H1 (cell line): ENCODE measurements at regions of chr7 and their contacts with region 1.

Region 1: DNA sequence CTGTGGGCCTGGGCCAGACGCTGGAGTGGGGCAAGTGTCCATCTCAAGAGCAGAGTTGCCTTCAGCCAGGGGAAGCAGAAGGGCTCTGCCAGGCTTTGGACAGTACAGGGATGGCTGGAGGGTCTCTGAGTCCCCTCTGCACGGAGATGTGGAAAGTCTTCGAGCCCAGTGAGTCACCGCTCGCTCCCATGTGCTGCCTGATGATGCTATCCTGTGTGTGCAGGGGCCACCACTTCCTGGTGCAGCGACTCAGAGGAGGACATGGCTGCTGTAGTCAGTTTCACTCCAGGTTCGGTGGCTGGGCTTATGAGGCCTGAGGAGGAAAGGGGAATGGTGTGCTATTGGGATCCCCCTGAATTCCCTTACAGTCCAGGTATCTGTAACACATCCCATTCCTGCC is 6.0 kb downstream of the ADCYAP1R1 start:
- DNase-seq: no peak
- H3K4me3 ChIP-seq: no peak overlapping the region
- H3K27ac ChIP-seq: no peak overlapping the region
- H3K4me1 ChIP-seq: peaks cover 0 to 12% (median 8%) of the 10 kb centered on the region in 4 experiments; a peak in 5 of 7 replicates
- H3K27me3 ChIP-seq: peaks cover 3 to 12% (median 11%) of the 10 kb centered on the region in 4 experiments; a peak in 6 of 7 replicates
- CTCF ChIP-seq: no peak
- EP300 ChIP-seq: no peak
- POLR2A ChIP-seq: no peak
- RAD21 ChIP-seq: no peak

Region 2: DNA sequence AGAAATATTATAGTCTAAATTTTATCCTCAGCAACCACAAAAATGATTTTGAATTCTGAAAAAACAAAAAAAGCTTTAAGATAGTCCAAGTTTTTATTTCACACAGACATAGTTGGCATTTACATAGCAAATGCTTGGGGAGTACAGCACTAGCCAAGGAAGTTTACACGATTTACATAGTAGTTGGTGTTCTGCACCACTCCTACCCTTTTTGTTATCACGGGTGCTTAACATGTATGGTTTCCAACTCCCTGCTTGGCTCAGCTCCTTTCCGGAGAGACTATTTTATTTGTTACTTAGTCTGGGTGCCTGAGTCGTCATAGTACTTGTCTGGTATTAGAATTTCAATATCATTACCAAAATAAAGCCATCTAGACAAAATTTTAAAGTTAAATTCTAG is 103.2 kb before region 1 on chr7:
- CTCF ChIA-PET with region 1: no interaction called
- POLR2A ChIA-PET with region 1: no interaction called
- DNase-seq: no peak
- H3K4me3 ChIP-seq: no peak overlapping the region
- H3K27ac ChIP-seq: no peak overlapping the region
- H3K4me1 ChIP-seq: no peaks in the 10 kb centered on the region
- H3K27me3 ChIP-seq: no peaks in the 10 kb centered on the region
- CTCF ChIP-seq: no peak
- EP300 ChIP-seq: no peak
- POLR2A ChIP-seq: no peak
- RAD21 ChIP-seq: no peak

Region 3: GRCh38 chr7:30974605-30975255 is 83.4 kb before region 1 on chr7:
- CTCF ChIA-PET with region 1: interaction called, 13 read pairs
- POLR2A ChIA-PET with region 1: no interaction called
- DNase-seq: peak; percentile 36 to 87
- H3K4me3 ChIP-seq: no peak overlapping the region
- H3K27ac ChIP-seq: no peak overlapping the region
- H3K4me1 ChIP-seq: peaks cover 0 to 7% (median 4%) of the 10 kb centered on the region in 4 experiments; a peak in 4 of 7 replicates
- H3K27me3 ChIP-seq: no peaks in the 10 kb centered on the region; a peak in 2 of 7 replicates
- CTCF ChIP-seq: peak; percentile 91 to 94 (median 91)
- EP300 ChIP-seq: peak in 1 of 2 experiments; percentile 68; a peak in 1 of 3 replicates
- POLR2A ChIP-seq: no peak
- RAD21 ChIP-seq: peak; percentile 85 to 87

Region 4: GRCh38 chr7:31082447-31082846 is 24.3 kb after region 1 on chr7:
- CTCF ChIA-PET with region 1: interaction called, 23 read pairs
- POLR2A ChIA-PET with region 1: no interaction called
- DNase-seq: no peak
- H3K4me3 ChIP-seq: no peak overlapping the region
- H3K27ac ChIP-seq: no peak overlapping the region
- H3K4me1 ChIP-seq: no peaks in the 10 kb centered on the region; a peak in 1 of 7 replicates
- H3K27me3 ChIP-seq: no peaks in the 10 kb centered on the region
- CTCF ChIP-seq: no peak
- EP300 ChIP-seq: no peak
- POLR2A ChIP-seq: no peak
- RAD21 ChIP-seq: no peak

Region 5: DNA sequence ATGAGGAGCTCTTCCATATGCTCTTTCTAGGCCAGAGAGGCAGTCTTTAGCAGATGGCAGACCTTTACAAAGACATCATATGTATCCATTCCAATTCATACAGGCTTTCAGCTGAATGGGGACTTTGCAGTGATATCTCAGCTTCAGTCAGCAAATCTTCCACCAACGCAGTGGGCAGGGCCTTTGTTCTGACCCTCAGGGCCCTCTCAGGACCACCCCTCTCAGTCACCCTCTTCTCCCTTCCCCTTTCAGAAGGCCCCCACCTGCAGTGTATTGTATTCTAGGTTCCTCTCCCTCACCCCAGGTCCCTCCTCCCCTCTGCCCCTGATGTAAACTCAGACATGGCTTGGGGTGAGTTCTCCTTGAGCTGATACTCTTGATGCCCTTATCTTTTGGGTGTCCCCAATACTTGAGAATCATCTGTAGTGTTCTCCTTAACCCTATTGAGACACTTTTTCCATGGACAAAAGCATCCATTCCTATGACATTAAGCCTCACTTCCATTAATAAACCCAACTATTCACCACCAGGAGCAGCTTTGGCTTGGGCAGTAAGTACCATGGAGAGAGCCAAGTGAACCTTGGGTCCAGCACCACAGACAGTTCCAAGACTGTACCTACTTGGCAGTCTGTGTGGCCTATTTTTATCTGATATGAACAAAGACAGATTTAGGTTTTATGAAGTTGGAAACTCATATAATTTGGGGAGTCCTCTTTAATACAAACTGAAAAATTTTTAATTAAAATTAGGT is 56.6 kb after region 1 on chr7:
- CTCF ChIA-PET with region 1: interaction called, 215 read pairs
- POLR2A ChIA-PET with region 1: no interaction called
- DNase-seq: peak in 1 of 2 experiments; percentile 50
- H3K4me3 ChIP-seq: no peak overlapping the region
- H3K27ac ChIP-seq: no peak overlapping the region
- H3K4me1 ChIP-seq: peaks cover 0 to 3% (median 0%) of the 10 kb centered on the region in 4 experiments; a peak in 1 of 7 replicates
- H3K27me3 ChIP-seq: no peaks in the 10 kb centered on the region
- CTCF ChIP-seq: no peak
- EP300 ChIP-seq: no peak
- POLR2A ChIP-seq: no peak
- RAD21 ChIP-seq: no peak